T-cell (primary cell): ENCODE measurements at regions of chr3 and their contacts with region 1.

Region 1: DNA sequence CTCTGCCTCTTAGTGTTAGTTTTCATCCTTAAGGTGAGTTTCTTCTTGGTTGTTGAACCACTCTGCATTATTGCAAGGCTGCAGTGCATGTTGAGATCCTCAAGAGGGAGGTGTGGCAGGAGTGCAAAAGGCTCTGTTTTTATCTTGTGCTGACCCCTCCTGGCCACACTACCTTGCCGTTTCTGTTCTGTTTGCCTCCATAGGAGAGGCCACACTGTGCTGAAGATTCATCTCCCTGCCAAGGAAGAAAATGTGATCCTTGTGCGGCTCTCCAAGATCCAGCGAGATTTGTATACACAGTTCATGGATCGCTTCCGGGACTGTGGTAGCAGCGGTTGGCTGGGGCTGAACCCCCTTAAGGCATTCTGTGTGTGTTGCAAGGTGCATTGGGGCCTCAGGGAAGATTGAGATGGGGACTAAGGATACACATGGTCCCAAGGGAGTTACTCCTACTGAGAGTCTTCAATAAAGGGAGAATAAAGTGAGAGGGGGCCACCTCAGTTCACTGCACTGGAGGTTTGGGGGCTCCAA is 33.0 kb upstream of the TEX264 start:
- DNase-seq: peak in 11 of 35 experiments; percentile 2 to 42 (median 5)
- ATAC-seq: peak in 2 of 4 experiments; percentile 24 to 48
- H3K4me3 ChIP-seq: no peak overlapping the region
- H3K4me3 Mint-ChIP-seq: no peak overlapping the region
- H3K27ac ChIP-seq: no peak overlapping the region
- H3K27ac Mint-ChIP-seq: no peak overlapping the region
- H3K4me1 ChIP-seq: no peaks in the 10 kb centered on the region
- H3K4me1 Mint-ChIP-seq: no peaks in the 10 kb centered on the region
- H3K27me3 ChIP-seq: no peaks in the 10 kb centered on the region
- H3K27me3 Mint-ChIP-seq: no peaks in the 10 kb centered on the region

Region 2: DNA sequence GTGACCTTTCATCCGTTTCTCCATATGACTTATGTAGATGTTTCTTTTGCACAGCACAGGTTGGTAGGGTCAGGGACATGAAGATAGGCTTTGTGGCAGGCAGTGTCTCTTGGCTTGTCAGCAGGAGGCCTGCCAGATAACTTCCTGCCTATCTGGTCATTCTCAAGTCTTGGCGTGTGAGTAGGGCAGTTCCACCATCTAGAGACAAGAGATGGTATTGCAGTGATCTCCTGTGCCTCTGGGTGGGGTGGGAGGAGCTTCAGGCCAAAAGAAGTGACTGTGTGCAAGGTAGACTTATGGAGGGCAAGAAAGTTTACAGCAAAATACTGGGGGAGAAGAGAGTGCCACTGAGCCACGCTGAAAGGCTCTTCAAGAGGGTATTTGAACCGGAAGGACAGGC is 44.1 kb after region 1 on chr3:
- CTCF ChIA-PET with region 1: interaction called, 9 to 14 read pairs
- POLR2A ChIA-PET with region 1: no interaction called
- DNase-seq: peak; percentile 45 to 91 (median 70)
- ATAC-seq: peak; percentile 69 to 79 (median 73)
- H3K4me3 ChIP-seq: peak overlapping the region; percentile 25 to 46
- H3K4me3 Mint-ChIP-seq: peak overlapping the region; percentile 55 to 92 (median 58)
- H3K27ac ChIP-seq: peak overlapping the region; percentile 58
- H3K27ac Mint-ChIP-seq: peak overlapping the region; percentile 78 to 79
- H3K4me1 ChIP-seq: peaks cover 67 to 99% of the 10 kb centered on the region in 2 experiments
- H3K4me1 Mint-ChIP-seq: peaks cover 94 to 97% (median 96%) of the 10 kb centered on the region in 3 donors
- H3K27me3 ChIP-seq: no peaks in the 10 kb centered on the region
- H3K27me3 Mint-ChIP-seq: no peaks in the 10 kb centered on the region